Prostate gland (tissue), 2 donors: ENCODE measurements at regions of chr5 and their contacts with region 1.

Region 1: DNA sequence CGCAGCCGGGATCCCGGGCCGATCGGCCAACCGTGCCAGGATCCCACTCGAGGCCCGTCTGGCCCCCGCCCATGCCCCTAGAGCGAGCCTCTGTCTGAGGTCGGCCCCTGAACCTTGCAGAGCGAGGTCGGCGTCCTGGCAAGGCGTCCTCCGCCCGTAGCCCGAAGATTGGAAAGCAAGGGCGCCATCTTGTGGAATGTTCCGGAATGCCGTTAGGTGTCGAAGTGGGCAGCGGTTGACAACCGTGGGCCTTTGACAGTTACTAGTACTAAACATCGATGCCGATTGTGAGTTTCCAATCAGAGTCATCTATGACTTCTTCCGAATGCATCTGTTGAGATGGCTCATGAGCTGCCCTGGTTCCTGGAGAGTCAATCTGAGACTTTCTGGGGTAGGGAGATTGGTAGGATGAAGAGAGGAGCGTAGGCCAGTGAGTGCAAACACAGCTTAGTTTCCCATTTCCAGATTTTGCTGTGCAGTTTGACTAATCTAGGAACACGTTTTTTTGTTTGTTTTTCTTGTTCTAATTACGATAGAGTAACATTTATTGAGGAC is 923 bp upstream of the PLK2 start:
- DNase-seq: peak; percentile 90
- H3K4me3 ChIP-seq: peak overlapping the region; percentile 68 to 71
- H3K27ac ChIP-seq: peak overlapping the region; percentile 86 to 91
- H3K4me1 ChIP-seq: no peaks in the 10 kb centered on the region
- H3K27me3 ChIP-seq: no peaks in the 10 kb centered on the region
- CTCF ChIP-seq: peak; percentile 74 to 89 (median 84)
- POLR2A ChIP-seq: no peak

Region 2: GRCh38 chr5:56900858-56901578 is 1559.8 kb before region 1 on chr5:
- intact Hi-C with region 1: loop called (anchors 5 kb)
- DNase-seq: peak; percentile 22
- H3K4me3 ChIP-seq: no peak overlapping the region
- H3K27ac ChIP-seq: no peak overlapping the region
- H3K4me1 ChIP-seq: no peaks in the 10 kb centered on the region
- H3K27me3 ChIP-seq: no peaks in the 10 kb centered on the region
- CTCF ChIP-seq: peak; percentile 40 to 76 (median 70)
- POLR2A ChIP-seq: no peak

Region 3: DNA sequence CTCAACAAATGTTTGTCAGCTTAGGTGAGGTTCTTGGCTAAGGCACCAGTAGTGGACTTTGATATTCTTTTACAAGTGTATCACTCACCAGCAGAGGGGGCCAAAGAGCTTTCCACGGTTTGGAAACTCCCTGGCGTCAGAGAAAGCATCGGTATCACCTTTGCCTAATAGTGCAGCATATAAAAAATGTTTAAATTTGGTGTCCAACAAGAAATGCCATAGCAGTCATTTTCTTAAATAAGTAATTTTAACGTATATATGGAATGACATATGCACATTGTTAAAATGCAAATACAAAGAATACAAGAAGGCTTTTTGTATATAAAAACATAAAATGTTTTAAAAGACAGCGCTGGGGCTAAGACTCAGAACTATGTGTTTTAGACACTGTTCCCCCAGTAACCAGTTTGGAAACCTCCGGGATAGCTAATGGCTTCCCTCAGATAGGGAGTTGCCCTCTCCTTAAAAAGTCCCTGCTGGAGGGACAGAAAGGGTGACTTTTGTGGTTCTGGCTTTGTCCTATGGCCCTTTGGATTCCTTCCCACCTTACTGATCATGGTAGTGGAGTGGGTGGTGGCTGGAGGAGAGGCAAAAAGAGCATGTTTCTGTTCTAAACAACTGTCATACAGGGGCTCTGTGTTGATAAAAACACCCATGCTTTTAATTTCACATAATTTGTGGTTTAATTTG is 1162.4 kb before region 1 on chr5:
- intact Hi-C with region 1: loop called (anchors 2 kb)
- DNase-seq: peak; percentile 82
- H3K4me3 ChIP-seq: no peak overlapping the region
- H3K27ac ChIP-seq: no peak overlapping the region
- H3K4me1 ChIP-seq: no peaks in the 10 kb centered on the region
- H3K27me3 ChIP-seq: no peaks in the 10 kb centered on the region
- CTCF ChIP-seq: peak; percentile 68 to 84 (median 76)
- POLR2A ChIP-seq: no peak

Region 4: GRCh38 chr5:57499262-57500050 is 961.4 kb before region 1 on chr5:
- intact Hi-C with region 1: loop called (anchors 5 kb)
- DNase-seq: no peak
- H3K4me3 ChIP-seq: no peak overlapping the region
- H3K27ac ChIP-seq: no peak overlapping the region
- H3K4me1 ChIP-seq: no peaks in the 10 kb centered on the region
- H3K27me3 ChIP-seq: no peaks in the 10 kb centered on the region
- CTCF ChIP-seq: peak in 3 of 4 experiments; percentile 29 to 54 (median 51)
- POLR2A ChIP-seq: no peak

Region 5: DNA sequence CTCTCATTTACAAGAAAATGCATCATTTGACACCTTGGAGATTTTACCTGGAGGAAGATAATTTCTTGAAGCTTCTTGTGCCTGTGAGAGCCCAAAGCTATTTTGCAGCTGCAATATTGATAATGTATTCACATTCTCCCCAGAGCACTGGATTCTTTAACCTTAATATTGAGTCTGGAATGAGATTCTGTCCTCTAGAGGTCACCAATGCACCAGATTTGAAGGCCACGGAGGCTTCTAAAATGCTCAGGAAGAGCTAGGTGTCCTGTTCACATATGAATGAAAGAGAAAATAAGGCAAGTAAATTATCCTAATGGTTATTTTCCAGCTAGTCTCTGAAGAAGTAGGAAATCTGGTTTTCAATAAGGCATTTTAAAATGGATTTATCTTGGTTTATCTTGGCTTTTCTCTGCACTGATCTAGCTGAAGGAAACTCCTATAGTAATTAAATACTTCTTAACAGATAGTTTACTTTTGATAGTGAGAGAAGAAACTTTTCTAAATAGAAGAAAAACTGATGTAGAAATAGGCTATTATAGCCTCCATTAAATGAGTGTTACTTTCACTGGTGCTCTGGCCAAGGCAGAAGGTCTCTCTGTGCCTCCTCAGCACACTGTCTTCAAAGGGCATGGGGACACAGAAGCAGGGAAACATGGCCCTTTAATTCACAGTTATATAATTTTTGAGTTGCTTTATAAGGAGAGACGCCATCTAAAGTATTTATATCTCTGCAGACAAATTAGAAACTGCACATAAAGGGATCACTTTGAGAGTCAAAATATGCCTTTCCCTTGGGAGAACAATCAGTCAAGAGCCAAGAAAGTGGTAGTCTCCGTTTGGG is 681.2 kb before region 1 on chr5:
- intact Hi-C with region 1: loop called (anchors 2 kb)
- DNase-seq: peak; percentile 36
- H3K4me3 ChIP-seq: no peak overlapping the region
- H3K27ac ChIP-seq: no peak overlapping the region
- H3K4me1 ChIP-seq: no peaks in the 10 kb centered on the region
- H3K27me3 ChIP-seq: no peaks in the 10 kb centered on the region
- CTCF ChIP-seq: peak in 3 of 4 experiments; percentile 57 to 65 (median 60)
- POLR2A ChIP-seq: no peak

Region 6: DNA sequence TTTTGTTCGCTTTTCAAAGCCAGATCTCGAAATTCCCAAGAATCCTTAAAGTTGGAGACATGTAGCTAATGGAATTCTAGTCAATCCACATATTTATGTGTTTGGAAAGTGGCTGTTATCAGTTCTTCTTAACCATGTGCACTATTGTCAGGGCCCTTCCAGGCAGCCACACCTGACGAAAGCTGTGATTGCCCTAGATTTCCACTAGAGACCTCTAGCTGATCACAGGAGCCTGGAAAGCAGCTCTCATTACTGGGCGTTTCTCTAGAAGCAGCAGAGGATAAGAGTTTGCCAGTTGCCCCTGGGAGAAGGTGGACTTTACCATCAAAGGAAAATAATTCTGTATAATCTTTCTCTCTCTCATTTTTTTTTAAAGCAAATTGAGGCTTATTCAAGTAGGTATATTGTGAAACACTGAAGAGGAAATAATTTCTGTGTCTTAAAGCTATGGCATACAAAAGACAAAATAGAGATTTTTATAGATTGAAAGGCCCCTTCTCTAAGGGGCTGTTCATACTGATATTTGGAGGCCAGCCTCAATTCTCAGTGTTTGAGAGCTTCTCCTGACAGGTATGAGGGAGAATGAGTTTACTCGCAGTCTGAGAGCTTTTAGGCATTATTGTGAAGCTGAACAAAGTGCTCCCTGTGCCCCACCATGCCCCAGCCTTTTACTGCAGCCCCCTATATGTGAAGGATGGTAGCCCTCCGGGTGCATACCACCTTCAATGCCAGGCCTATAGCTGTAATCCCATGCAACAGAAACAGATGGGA is 572.8 kb before region 1 on chr5:
- intact Hi-C with region 1: loop called (anchors 5 kb)
- DNase-seq: peak; percentile 39
- H3K4me3 ChIP-seq: no peak overlapping the region
- H3K27ac ChIP-seq: no peak overlapping the region
- H3K4me1 ChIP-seq: no peaks in the 10 kb centered on the region
- H3K27me3 ChIP-seq: no peaks in the 10 kb centered on the region
- CTCF ChIP-seq: peak in 3 of 4 experiments; percentile 29 to 72 (median 63)
- POLR2A ChIP-seq: no peak

Region 7: GRCh38 chr5:58400737-58401136 is 60.1 kb before region 1 on chr5:
- intact Hi-C with region 1: no loop called
- DNase-seq: no peak
- H3K4me3 ChIP-seq: no peak overlapping the region
- H3K27ac ChIP-seq: no peak overlapping the region
- H3K4me1 ChIP-seq: no peaks in the 10 kb centered on the region
- H3K27me3 ChIP-seq: no peaks in the 10 kb centered on the region
- CTCF ChIP-seq: no peak
- POLR2A ChIP-seq: no peak

Region 8: GRCh38 chr5:58544195-58544594 is 83.4 kb after region 1 on chr5:
- intact Hi-C with region 1: no loop called
- DNase-seq: no peak
- H3K4me3 ChIP-seq: no peak overlapping the region
- H3K27ac ChIP-seq: no peak overlapping the region
- H3K4me1 ChIP-seq: no peaks in the 10 kb centered on the region
- H3K27me3 ChIP-seq: no peaks in the 10 kb centered on the region
- CTCF ChIP-seq: no peak
- POLR2A ChIP-seq: no peak

Region 9: GRCh38 chr5:59126708-59127573 is 666.1 kb after region 1 on chr5:
- intact Hi-C with region 1: no loop called
- DNase-seq: no peak
- H3K4me3 ChIP-seq: peak overlapping the region; percentile 8 to 10
- H3K27ac ChIP-seq: peak overlapping the region; percentile 49 to 70
- H3K4me1 ChIP-seq: peaks cover 6% of the 10 kb centered on the region
- H3K27me3 ChIP-seq: no peaks in the 10 kb centered on the region
- CTCF ChIP-seq: no peak
- POLR2A ChIP-seq: no peak